HCT116 (cell line): ENCODE measurements at regions of chr20 and their contacts with region 1.

Region 1: DNA sequence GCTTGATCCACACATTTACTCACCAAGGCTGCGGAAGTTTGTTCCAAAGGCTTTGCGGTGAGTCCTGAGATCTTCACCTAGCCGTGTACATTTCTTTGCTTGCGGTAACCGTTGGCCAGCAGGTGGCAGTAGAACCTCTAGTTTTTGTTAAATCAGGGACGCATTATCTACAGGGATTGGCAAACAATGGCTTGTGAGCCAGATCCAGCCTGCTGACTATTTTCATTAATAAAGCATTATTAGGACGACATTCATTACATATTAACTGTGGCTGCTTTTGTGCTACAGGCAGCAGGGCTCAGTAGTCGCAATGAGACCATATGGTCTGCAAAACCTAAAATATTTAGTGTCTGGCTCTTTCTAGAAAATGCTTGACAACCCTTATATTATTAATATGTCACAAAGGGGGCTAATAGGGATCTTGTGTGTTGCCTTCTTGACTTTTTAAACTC is 174.1 kb downstream of the DOK5 start:
- DNase-seq: peak; percentile 62
- ATAC-seq: peak; percentile 92
- H3K4me3 ChIP-seq: no peak overlapping the region
- H3K27ac ChIP-seq: no peak overlapping the region
- H3K4me1 ChIP-seq: no peaks in the 10 kb centered on the region
- H3K27me3 ChIP-seq: no peaks in the 10 kb centered on the region
- CTCF ChIP-seq: peak; percentile 46 to 81 (median 75); a peak in 5 of 6 replicates
- POLR2A ChIP-seq: no peak
- RAD21 ChIP-seq: peak; percentile 60

Region 2: GRCh38 chr20:53984356-53985149 is 665.0 kb before region 1 on chr20:
- CTCF ChIA-PET with region 1: no interaction called
- POLR2A ChIA-PET with region 1: no interaction called
- RAD21 ChIA-PET with region 1: no interaction called
- intact Hi-C with region 1: loop called (anchors 10 kb)
- DNase-seq: no peak
- ATAC-seq: no peak
- H3K4me3 ChIP-seq: no peak overlapping the region
- H3K27ac ChIP-seq: no peak overlapping the region
- H3K4me1 ChIP-seq: no peaks in the 10 kb centered on the region
- H3K27me3 ChIP-seq: peaks cover 3% of the 10 kb centered on the region; the same call in 1 of the 2 replicates
- CTCF ChIP-seq: no peak
- POLR2A ChIP-seq: no peak
- RAD21 ChIP-seq: no peak

Region 3: DNA sequence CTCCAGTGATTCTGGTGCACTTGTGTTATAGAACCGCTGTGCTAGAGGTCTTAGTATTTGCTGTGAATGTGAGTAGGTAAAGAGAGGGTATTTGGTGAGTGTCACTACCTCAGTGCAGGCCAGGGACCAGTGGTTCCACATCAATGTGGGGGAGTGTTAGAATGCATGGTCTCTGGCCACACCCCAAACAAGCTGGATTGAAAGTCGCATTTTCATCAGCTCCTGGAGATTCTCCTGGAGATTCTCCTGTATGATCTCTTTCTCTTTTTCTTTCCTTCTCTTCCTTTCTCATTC is 552.4 kb before region 1 on chr20:
- CTCF ChIA-PET with region 1: no interaction called
- POLR2A ChIA-PET with region 1: no interaction called
- RAD21 ChIA-PET with region 1: no interaction called
- intact Hi-C with region 1: loop called (anchors 1 kb)
- DNase-seq: no peak
- ATAC-seq: peak; percentile 58; the same call in 1 of the 2 replicates
- H3K4me3 ChIP-seq: no peak overlapping the region
- H3K27ac ChIP-seq: peak overlapping the region; percentile 29
- H3K4me1 ChIP-seq: peaks cover 8 to 24% of the 10 kb centered on the region in 2 experiments; a peak in 3 of 4 replicates
- H3K27me3 ChIP-seq: no peaks in the 10 kb centered on the region
- CTCF ChIP-seq: no peak
- POLR2A ChIP-seq: no peak
- RAD21 ChIP-seq: no peak

Region 4: DNA sequence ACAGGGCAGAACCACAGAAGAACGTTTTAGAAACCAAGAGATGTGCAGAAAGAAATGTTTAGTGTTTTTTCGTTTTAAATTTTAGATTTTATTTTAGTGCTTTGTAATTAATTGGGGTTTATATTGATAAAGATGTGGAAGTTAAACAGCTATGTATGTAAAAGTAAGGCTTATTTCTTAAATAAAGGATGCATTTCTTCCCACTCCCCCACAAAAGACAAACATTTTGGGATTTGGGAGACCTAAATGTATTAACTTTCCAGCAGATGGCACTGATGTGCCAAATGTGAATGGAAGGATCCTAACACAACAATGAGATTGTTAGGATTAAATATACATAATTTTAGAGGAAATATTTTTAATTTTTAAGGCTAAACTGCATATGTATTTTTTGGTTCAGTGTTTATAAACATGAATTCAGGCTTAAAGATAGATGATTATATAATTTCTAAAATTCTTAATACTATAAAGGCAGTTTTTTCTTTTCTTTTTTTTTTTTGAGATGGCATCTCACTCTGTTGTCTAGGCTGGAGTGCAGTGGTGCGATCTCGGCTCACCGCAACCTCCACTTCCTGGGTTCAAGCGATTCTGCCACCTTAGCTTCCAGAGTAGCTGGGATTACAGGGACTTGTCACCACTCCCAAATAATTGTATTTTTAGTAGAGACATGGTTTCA is 429.6 kb before region 1 on chr20:
- CTCF ChIA-PET with region 1: interaction called, 15 read pairs
- POLR2A ChIA-PET with region 1: no interaction called
- RAD21 ChIA-PET with region 1: no interaction called
- intact Hi-C with region 1: loop called (anchors 1 kb)
- DNase-seq: peak; percentile 28
- ATAC-seq: peak; percentile 58; the same call in 1 of the 2 replicates
- H3K4me3 ChIP-seq: no peak overlapping the region
- H3K27ac ChIP-seq: no peak overlapping the region
- H3K4me1 ChIP-seq: no peaks in the 10 kb centered on the region
- H3K27me3 ChIP-seq: no peaks in the 10 kb centered on the region
- CTCF ChIP-seq: peak; percentile 44 to 69 (median 61); a peak in 5 of 6 replicates
- POLR2A ChIP-seq: no peak
- RAD21 ChIP-seq: peak; percentile 80

Region 5: GRCh38 chr20:54995553-54995952 is 346.0 kb after region 1 on chr20:
- CTCF ChIA-PET with region 1: no interaction called
- POLR2A ChIA-PET with region 1: no interaction called
- RAD21 ChIA-PET with region 1: no interaction called
- intact Hi-C with region 1: no loop called
- DNase-seq: no peak
- ATAC-seq: no peak
- H3K4me3 ChIP-seq: no peak overlapping the region
- H3K27ac ChIP-seq: no peak overlapping the region
- H3K4me1 ChIP-seq: no peaks in the 10 kb centered on the region
- H3K27me3 ChIP-seq: no peaks in the 10 kb centered on the region
- CTCF ChIP-seq: no peak
- POLR2A ChIP-seq: no peak
- RAD21 ChIP-seq: no peak

Region 6: GRCh38 chr20:56247948-56248782 is 1598.6 kb after region 1 on chr20 and contains the start of gene MC3R:
- CTCF ChIA-PET with region 1: no interaction called
- POLR2A ChIA-PET with region 1: no interaction called
- RAD21 ChIA-PET with region 1: no interaction called
- intact Hi-C with region 1: loop called (anchors 2 kb)
- DNase-seq: peak; percentile 35
- ATAC-seq: peak; percentile 95
- H3K4me3 ChIP-seq: no peak within 1 kb of the TSS
- H3K27ac ChIP-seq: no peak within 1 kb of the TSS
- H3K4me1 ChIP-seq: no peaks in the 10 kb centered on the region
- H3K27me3 ChIP-seq: no peaks in the 10 kb centered on the region; the same call in 1 of the 2 replicates
- CTCF ChIP-seq: peak; percentile 34 to 86 (median 81); a peak in 5 of 6 replicates
- POLR2A ChIP-seq: no peak
- RAD21 ChIP-seq: peak; percentile 64
- total RNA-seq, gene MC3R: not detected

Region 7: GRCh38 chr20:56574531-56575142 is 1925.1 kb after region 1 on chr20:
- CTCF ChIA-PET with region 1: no interaction called
- POLR2A ChIA-PET with region 1: no interaction called
- RAD21 ChIA-PET with region 1: no interaction called
- intact Hi-C with region 1: loop called (anchors 5 kb)
- DNase-seq: no peak
- ATAC-seq: peak; percentile 51; the same call in 1 of the 2 replicates
- H3K4me3 ChIP-seq: no peak overlapping the region
- H3K27ac ChIP-seq: no peak overlapping the region
- H3K4me1 ChIP-seq: peaks cover 4 to 27% of the 10 kb centered on the region in 2 experiments; a peak in 2 of 4 replicates
- H3K27me3 ChIP-seq: no peaks in the 10 kb centered on the region
- CTCF ChIP-seq: no peak
- POLR2A ChIP-seq: no peak
- RAD21 ChIP-seq: no peak